Posterior cingulate gyrus (tissue), 11 donors: ENCODE measurements at regions of chr3 and their contacts with region 1.

Region 1: DNA sequence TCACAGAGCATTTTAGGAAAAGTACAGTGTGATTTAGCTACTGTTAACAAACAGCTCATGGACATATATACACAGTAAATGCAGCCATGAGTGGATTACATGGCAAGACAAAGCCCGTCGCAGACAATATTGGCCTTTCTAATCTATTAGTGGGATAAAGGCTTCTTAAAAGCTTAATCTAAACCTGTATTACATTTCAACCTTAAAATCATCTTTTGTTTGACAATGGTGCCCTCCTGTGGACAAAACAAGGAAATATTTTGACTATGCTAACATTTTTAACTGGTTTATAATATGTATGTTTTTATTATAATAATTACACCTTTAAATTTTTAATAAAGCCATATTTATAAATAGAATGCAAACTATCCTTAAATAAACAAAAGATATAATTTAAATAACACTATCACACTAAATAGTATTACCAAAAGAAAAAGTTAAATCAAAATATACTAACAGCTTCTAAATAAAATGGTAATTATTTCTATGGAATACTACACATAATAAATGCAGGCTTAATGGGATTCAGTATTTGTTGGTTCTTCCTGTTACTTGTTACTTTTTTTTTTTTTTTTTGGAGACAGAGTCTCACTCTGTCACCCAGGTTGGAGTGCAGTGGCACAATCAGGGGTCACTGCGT is 38.6 kb downstream of the TAFA4 start:
- DNase-seq: no peak

Region 2: DNA sequence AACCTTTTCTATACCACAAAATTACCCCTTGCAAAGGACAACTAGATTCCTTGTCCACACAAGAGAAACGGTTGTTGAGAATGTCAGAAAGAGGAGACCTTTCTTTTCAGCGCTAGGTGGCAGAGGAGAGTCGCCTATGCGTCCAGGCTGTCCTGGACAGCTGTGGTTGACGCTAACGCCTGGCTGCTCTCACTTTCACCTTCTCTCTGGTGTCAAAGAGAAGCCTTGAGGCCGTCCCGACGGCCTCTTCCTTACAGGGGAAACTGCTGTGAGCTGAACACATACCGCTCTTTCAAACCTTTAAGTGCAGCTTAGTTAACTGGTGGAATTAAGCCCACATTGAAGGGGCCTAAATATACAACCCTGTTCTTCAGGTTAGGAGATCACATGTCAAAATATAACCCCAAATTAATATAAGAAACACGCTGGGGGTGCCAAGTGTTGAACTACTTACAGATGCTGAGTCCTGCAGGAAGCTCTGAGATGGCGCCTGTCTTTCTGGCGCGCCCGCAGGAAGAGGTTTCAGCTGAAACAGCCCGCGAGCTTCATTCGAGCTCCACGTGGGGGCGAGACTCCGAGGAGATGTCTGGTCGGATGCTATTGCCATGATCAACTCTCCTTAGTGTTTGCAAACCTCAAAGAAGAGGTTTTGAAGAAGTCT is 1921.7 kb before region 1 on chr3:
- intact Hi-C with region 1: loop called (anchors 10 kb)
- DNase-seq: peak; percentile 28 to 93 (median 70)

Region 3: GRCh38 chr3:68931406-68932149 is 37.9 kb after region 1 on chr3:
- intact Hi-C with region 1: loop called (anchors 5 kb)
- DNase-seq: peak in 4 of 10 donors; percentile 12 to 55 (median 20)

Region 4: GRCh38 chr3:68943753-68944500 is 50.2 kb after region 1 on chr3:
- intact Hi-C with region 1: no loop called
- DNase-seq: no peak

Region 5: DNA sequence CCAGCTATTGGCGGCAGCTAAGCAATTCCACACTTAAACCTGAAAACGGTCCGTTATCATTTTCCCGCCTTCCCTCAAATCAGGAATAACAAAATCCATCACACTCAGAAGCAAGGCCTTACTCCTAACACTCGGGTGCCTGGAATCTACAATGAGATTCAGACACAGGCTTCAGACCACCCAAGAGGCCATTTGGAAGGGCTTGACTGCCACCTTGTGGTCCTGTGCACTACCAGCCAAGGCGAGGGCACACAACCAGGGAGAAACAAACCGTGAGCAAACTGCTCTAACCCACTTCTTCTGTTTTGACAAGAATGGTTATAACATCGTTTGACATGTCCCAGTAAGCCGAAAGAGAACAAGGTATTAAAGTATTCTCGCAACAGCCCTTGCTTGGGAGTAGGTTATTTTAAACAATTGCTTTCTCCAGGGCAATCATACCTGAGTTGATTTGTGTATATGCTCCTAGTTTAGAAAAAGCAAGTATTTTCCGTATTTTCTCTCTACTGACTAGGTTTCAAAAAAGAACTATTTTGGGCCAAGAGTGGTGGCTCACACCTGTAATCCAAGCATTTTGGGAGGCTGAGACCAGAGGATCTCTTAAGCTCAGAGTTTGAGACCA is 78.7 kb after region 1 on chr3:
- intact Hi-C with region 1: loop called (anchors 5 kb)
- DNase-seq: peak; percentile 45 to 95 (median 77)